ENCODE measurements at regions of chr6 and their contacts with region 1.

Region 1: GRCh38 chr6:11064836-11065235 is 20.7 kb upstream of the ELOVL2 start:
- DNase-seq: no peak
- ATAC-seq: no peak
- H3K4me3 Mint-ChIP-seq: no peak overlapping the region
- H3K27ac Mint-ChIP-seq: no peak overlapping the region
- H3K4me1 Mint-ChIP-seq: no peaks in the 10 kb centered on the region
- H3K27me3 Mint-ChIP-seq: no peaks in the 10 kb centered on the region

Region 2: GRCh38 chr6:10478187-10479040 is 586.4 kb before region 1 on chr6:
- CTCF ChIA-PET with region 1: interaction called, 16 read pairs
- POLR2A ChIA-PET with region 1: no interaction called
- intact Hi-C with region 1: loop called in 1 of 2 experiments (anchors 1 kb)
- DNase-seq: no peak
- ATAC-seq: peak; percentile 44
- H3K4me3 Mint-ChIP-seq: no peak overlapping the region
- H3K27ac Mint-ChIP-seq: peak overlapping the region; percentile 7
- H3K4me1 Mint-ChIP-seq: no peaks in the 10 kb centered on the region
- H3K27me3 Mint-ChIP-seq: peaks cover 5% of the 10 kb centered on the region

Region 3: GRCh38 chr6:10800829-10801535 is 263.9 kb before region 1 on chr6:
- CTCF ChIA-PET with region 1: interaction called, 4 read pairs
- POLR2A ChIA-PET with region 1: no interaction called
- intact Hi-C with region 1: loop called in 1 of 2 experiments (anchors 5 kb)
- DNase-seq: peak; percentile 76
- ATAC-seq: peak; percentile 92
- H3K4me3 Mint-ChIP-seq: no peak overlapping the region
- H3K27ac Mint-ChIP-seq: no peak overlapping the region
- H3K4me1 Mint-ChIP-seq: no peaks in the 10 kb centered on the region
- H3K27me3 Mint-ChIP-seq: no peaks in the 10 kb centered on the region

Region 4: GRCh38 chr6:10847684-10848083 is 217.2 kb before region 1 on chr6:
- CTCF ChIA-PET with region 1: no interaction called
- POLR2A ChIA-PET with region 1: no interaction called
- intact Hi-C with region 1: loop called in 1 of 2 experiments (anchors 10 kb)
- DNase-seq: no peak
- ATAC-seq: no peak
- H3K4me3 Mint-ChIP-seq: no peak overlapping the region
- H3K27ac Mint-ChIP-seq: no peak overlapping the region
- H3K4me1 Mint-ChIP-seq: no peaks in the 10 kb centered on the region
- H3K27me3 Mint-ChIP-seq: peaks cover 2% of the 10 kb centered on the region

Region 5: GRCh38 chr6:10954590-10955010 is 110.2 kb before region 1 on chr6:
- CTCF ChIA-PET with region 1: interaction called, 52 read pairs
- POLR2A ChIA-PET with region 1: no interaction called
- intact Hi-C with region 1: loop called (anchors 1 kb)
- DNase-seq: peak; percentile 90
- ATAC-seq: peak; percentile 85
- H3K4me3 Mint-ChIP-seq: no peak overlapping the region
- H3K27ac Mint-ChIP-seq: no peak overlapping the region
- H3K4me1 Mint-ChIP-seq: no peaks in the 10 kb centered on the region
- H3K27me3 Mint-ChIP-seq: peaks cover 18% of the 10 kb centered on the region

Region 6: GRCh38 chr6:11011787-11012234 is 53.0 kb before region 1 on chr6:
- CTCF ChIA-PET with region 1: no interaction called
- POLR2A ChIA-PET with region 1: no interaction called
- intact Hi-C with region 1: no loop called
- DNase-seq: no peak
- ATAC-seq: no peak
- H3K4me3 Mint-ChIP-seq: no peak overlapping the region
- H3K27ac Mint-ChIP-seq: no peak overlapping the region
- H3K4me1 Mint-ChIP-seq: no peaks in the 10 kb centered on the region
- H3K27me3 Mint-ChIP-seq: peaks cover 22% of the 10 kb centered on the region